CD4-positive, alpha-beta T cell (primary cell): ENCODE measurements at regions of chr17 and their contacts with region 1.

Region 1: GRCh38 chr17:58517734-58518609 is 3.5 kb upstream of the MTMR4 start:
- DNase-seq: peak; percentile 98 to 100 (median 99)
- ATAC-seq: peak; percentile 81
- H3K4me3 ChIP-seq: peak overlapping the region; percentile 72
- H3K4me3 Mint-ChIP-seq: peak overlapping the region; percentile 90
- H3K27ac ChIP-seq: peak overlapping the region; percentile 78 to 80
- H3K27ac Mint-ChIP-seq: peak overlapping the region; percentile 85
- H3K4me1 ChIP-seq: peaks cover 48% of the 10 kb centered on the region
- H3K4me1 Mint-ChIP-seq: peaks cover 44% of the 10 kb centered on the region
- H3K27me3 ChIP-seq: no peaks in the 10 kb centered on the region
- H3K27me3 Mint-ChIP-seq: no peaks in the 10 kb centered on the region
- CTCF ChIP-seq: no peak

Region 2: GRCh38 chr17:56833809-56834379 is 1684.1 kb before region 1 on chr17 and contains the starts of genes C17orf67 and DGKE:
- CTCF ChIA-PET with region 1: no interaction called
- POLR2A ChIA-PET with region 1: no interaction called
- intact Hi-C with region 1: loop called (anchors 5 to 10 kb)
- DNase-seq: peak; percentile 97 to 100 (median 99)
- ATAC-seq: peak; percentile 87
- H3K4me3 ChIP-seq: peak within 1 kb of the TSS; percentile 96
- H3K4me3 Mint-ChIP-seq: peak within 1 kb of the TSS; percentile 99
- H3K27ac ChIP-seq: peak within 1 kb of the TSS; percentile 58 to 83
- H3K27ac Mint-ChIP-seq: peak within 1 kb of the TSS; percentile 95
- H3K4me1 ChIP-seq: peaks cover 41% of the 10 kb centered on the region
- H3K4me1 Mint-ChIP-seq: peaks cover 67% of the 10 kb centered on the region
- H3K27me3 ChIP-seq: no peaks in the 10 kb centered on the region
- H3K27me3 Mint-ChIP-seq: no peaks in the 10 kb centered on the region
- CTCF ChIP-seq: no peak
- total RNA-seq, gene C17orf67: 4.3 to 4.8 TPM
- total RNA-seq, gene DGKE: 20.0 to 22.3 TPM

Region 3: GRCh38 chr17:58082870-58083490 is 435.0 kb before region 1 on chr17 and contains the start of gene DYNLL2:
- CTCF ChIA-PET with region 1: no interaction called
- POLR2A ChIA-PET with region 1: no interaction called
- intact Hi-C with region 1: loop called in 1 of 2 experiments (anchors 5 kb)
- DNase-seq: peak; percentile 81 to 94 (median 90)
- ATAC-seq: peak; percentile 78
- H3K4me3 ChIP-seq: peak within 1 kb of the TSS; percentile 71
- H3K4me3 Mint-ChIP-seq: peak within 1 kb of the TSS; percentile 91
- H3K27ac ChIP-seq: peak within 1 kb of the TSS; percentile 63 to 69
- H3K27ac Mint-ChIP-seq: peak within 1 kb of the TSS; percentile 89
- H3K4me1 ChIP-seq: peaks cover 38% of the 10 kb centered on the region
- H3K4me1 Mint-ChIP-seq: peaks cover 36% of the 10 kb centered on the region
- H3K27me3 ChIP-seq: no peaks in the 10 kb centered on the region
- H3K27me3 Mint-ChIP-seq: no peaks in the 10 kb centered on the region
- CTCF ChIP-seq: no peak
- total RNA-seq, gene DYNLL2: 30.9 to 32.2 TPM

Region 4: DNA sequence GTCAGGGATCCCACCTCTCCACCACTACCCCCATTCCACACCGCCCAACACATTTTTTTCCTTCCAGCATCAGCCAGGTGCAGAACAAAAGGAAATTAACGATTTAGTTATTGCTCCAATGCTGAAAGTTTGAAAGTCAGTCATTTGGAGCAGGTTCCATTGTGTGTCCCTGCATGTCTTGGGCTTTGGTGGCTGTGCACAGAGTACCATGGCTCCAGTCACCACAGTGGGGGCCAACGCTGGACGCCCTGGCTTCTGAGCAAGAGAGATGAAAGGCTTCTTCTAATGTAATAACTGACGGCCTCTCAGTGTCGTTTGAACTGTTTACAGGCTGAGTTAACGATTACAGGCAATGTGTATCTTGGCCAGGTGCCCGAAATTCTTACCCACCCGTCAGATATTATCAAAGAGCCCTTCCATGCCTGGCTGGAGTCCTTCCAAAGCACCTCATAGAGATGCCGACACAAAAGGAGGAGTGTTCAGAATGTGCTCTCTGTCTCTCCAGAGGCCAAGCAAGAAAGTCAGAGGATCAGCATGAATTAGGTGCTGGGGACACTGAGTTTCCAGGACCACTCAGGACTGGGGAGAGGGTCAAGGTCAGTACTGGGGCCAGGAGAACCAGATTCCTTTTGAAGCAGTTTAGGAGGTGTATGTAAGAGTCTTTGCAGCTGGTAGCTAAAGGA is 126.5 kb before region 1 on chr17:
- CTCF ChIA-PET with region 1: no interaction called
- POLR2A ChIA-PET with region 1: no interaction called
- intact Hi-C with region 1: no loop called
- DNase-seq: no peak
- ATAC-seq: no peak
- H3K4me3 ChIP-seq: no peak overlapping the region
- H3K4me3 Mint-ChIP-seq: no peak overlapping the region
- H3K27ac ChIP-seq: no peak overlapping the region
- H3K27ac Mint-ChIP-seq: no peak overlapping the region
- H3K4me1 ChIP-seq: no peaks in the 10 kb centered on the region
- H3K4me1 Mint-ChIP-seq: no peaks in the 10 kb centered on the region
- H3K27me3 ChIP-seq: no peaks in the 10 kb centered on the region
- H3K27me3 Mint-ChIP-seq: no peaks in the 10 kb centered on the region
- CTCF ChIP-seq: no peak

Region 5: DNA sequence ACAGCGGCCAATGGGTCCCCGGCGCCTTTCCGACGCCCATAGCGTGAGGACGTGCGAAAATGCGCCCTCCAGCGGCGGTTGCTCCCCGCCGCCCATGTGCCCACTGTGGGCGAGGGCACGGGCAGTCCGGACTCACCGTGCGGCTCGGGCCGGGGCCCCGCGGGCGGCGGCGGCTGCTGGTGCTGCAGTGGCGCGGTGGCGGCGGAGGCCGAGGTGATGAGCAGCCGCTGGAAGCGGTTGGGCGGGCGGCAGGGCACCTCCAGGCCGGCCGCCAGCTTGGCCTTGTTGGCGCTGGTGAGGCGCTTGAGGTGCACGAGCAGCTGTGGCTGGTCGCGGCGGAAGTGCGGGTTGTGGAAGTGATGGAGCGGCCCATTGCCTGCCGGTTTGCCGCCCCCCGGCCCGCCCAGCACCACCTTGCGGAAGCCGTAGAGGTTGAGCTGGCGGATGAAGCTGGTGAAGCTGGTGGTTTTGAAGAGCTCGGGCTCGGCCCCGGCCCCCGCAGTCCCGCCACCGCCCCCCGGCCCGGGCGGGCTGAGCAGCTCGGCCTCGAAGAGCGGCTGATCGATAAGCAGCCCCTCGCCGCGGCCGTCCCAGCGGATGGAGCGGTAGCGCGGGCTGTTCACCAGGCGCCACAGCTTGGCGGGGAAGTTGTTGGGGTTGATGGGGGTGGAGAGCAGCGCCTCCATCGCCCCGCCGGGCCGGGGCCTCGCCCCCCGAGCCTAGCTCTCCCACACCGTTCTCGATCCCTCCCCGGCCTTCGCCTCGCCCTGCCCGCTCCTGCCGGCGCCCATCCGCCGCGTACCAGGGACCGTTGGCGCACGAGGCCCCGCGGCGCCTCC is 30.2 kb before region 1 on chr17 and contains the start of gene HSF5:
- CTCF ChIA-PET with region 1: interaction called, 5 read pairs
- POLR2A ChIA-PET with region 1: interaction called, 17 read pairs
- intact Hi-C with region 1: no loop called
- DNase-seq: peak; percentile 52 to 88 (median 75)
- ATAC-seq: peak; percentile 93
- H3K4me3 ChIP-seq: peak within 1 kb of the TSS; percentile 52
- H3K4me3 Mint-ChIP-seq: peak within 1 kb of the TSS; percentile 62
- H3K27ac ChIP-seq: peak within 1 kb of the TSS in 1 of 2 donors; percentile 43
- H3K27ac Mint-ChIP-seq: peak within 1 kb of the TSS; percentile 39
- H3K4me1 ChIP-seq: peaks cover 13% of the 10 kb centered on the region
- H3K4me1 Mint-ChIP-seq: peaks cover 5% of the 10 kb centered on the region
- H3K27me3 ChIP-seq: no peaks in the 10 kb centered on the region
- H3K27me3 Mint-ChIP-seq: no peaks in the 10 kb centered on the region
- CTCF ChIP-seq: peak; percentile 68
- total RNA-seq, gene HSF5: 1.6 to 1.7 TPM

Region 6: GRCh38 chr17:58541249-58541648 is 23.3 kb after region 1 on chr17:
- CTCF ChIA-PET with region 1: no interaction called
- POLR2A ChIA-PET with region 1: no interaction called
- intact Hi-C with region 1: no loop called
- DNase-seq: no peak
- ATAC-seq: no peak
- H3K4me3 ChIP-seq: no peak overlapping the region
- H3K4me3 Mint-ChIP-seq: no peak overlapping the region
- H3K27ac ChIP-seq: no peak overlapping the region
- H3K27ac Mint-ChIP-seq: no peak overlapping the region
- H3K4me1 ChIP-seq: no peaks in the 10 kb centered on the region
- H3K4me1 Mint-ChIP-seq: no peaks in the 10 kb centered on the region
- H3K27me3 ChIP-seq: peaks cover 0 to 2% of the 10 kb centered on the region in 2 experiments
- H3K27me3 Mint-ChIP-seq: no peaks in the 10 kb centered on the region
- CTCF ChIP-seq: no peak

Region 7: GRCh38 chr17:58658804-58659713 is 141.1 kb after region 1 on chr17:
- CTCF ChIA-PET with region 1: interaction called, 3 read pairs
- POLR2A ChIA-PET with region 1: interaction called, 7 read pairs
- intact Hi-C with region 1: loop called in 1 of 2 experiments (anchors 1 kb)
- DNase-seq: peak; percentile 48 to 93 (median 66)
- ATAC-seq: peak; percentile 85
- H3K4me3 ChIP-seq: peak overlapping the region; percentile 58
- H3K4me3 Mint-ChIP-seq: peak overlapping the region; percentile 85
- H3K27ac ChIP-seq: peak overlapping the region; percentile 79 to 96
- H3K27ac Mint-ChIP-seq: peak overlapping the region; percentile 97
- H3K4me1 ChIP-seq: peaks cover 12% of the 10 kb centered on the region
- H3K4me1 Mint-ChIP-seq: peaks cover 15% of the 10 kb centered on the region
- H3K27me3 ChIP-seq: no peaks in the 10 kb centered on the region
- H3K27me3 Mint-ChIP-seq: peaks cover 5% of the 10 kb centered on the region
- CTCF ChIP-seq: no peak

Region 8: DNA sequence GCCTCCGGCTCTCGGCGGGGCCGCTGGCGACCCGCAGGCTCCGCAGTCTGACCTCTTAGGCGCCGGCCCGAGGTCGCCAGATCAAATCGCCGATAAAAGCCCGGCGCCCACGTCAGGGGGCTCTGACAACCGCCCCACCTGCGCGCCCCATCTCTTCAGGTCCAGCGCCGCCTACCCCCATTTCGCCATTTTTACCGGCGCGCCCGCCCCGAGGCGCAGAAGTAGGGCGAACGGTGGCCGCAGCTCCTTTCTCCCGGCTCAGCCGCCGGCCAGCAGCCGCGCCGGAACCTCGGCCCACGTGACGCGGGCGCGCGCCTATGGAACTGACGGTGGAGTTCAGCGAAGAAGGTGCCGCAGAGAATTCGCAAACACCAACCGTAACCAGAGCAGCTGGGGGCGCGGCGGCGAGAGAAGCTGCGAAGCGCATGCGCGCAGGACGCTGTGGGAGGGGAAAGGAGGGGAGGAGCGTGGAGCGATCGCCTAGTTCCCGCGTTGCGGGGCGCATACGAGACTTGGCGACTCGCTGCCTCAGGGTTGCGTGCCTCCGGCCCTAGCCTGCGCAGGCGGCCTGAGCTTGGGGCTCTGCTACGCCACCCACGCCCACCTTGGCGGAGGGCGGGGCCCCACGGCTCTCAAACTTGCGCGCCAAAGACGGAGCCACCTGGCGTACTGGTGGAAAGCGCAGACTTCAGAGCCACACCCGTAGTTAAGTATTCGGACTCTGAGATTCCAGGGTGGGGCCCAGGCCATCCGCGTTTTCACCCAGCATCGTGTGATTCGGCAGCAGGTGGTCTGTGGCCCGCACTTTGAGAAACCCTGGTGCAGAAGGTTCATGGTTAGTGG is 588.7 kb after region 1 on chr17 and contains the start of gene TRIM37:
- CTCF ChIA-PET with region 1: interaction called, 7 read pairs
- POLR2A ChIA-PET with region 1: interaction called, 10 read pairs
- intact Hi-C with region 1: loop called (anchors 5 kb)
- DNase-seq: peak; percentile 97 to 100 (median 98)
- ATAC-seq: peak; percentile 94
- H3K4me3 ChIP-seq: peak within 1 kb of the TSS; percentile 95
- H3K4me3 Mint-ChIP-seq: peak within 1 kb of the TSS; percentile 93
- H3K27ac ChIP-seq: peak within 1 kb of the TSS; percentile 91
- H3K27ac Mint-ChIP-seq: peak within 1 kb of the TSS; percentile 88
- H3K4me1 ChIP-seq: peaks cover 13% of the 10 kb centered on the region
- H3K4me1 Mint-ChIP-seq: peaks cover 41% of the 10 kb centered on the region
- H3K27me3 ChIP-seq: no peaks in the 10 kb centered on the region
- H3K27me3 Mint-ChIP-seq: no peaks in the 10 kb centered on the region
- CTCF ChIP-seq: no peak
- total RNA-seq, gene TRIM37: 16.8 to 18.0 TPM